ENCODE measurements at regions of chr6 and their contacts with region 1.

Region 1: DNA sequence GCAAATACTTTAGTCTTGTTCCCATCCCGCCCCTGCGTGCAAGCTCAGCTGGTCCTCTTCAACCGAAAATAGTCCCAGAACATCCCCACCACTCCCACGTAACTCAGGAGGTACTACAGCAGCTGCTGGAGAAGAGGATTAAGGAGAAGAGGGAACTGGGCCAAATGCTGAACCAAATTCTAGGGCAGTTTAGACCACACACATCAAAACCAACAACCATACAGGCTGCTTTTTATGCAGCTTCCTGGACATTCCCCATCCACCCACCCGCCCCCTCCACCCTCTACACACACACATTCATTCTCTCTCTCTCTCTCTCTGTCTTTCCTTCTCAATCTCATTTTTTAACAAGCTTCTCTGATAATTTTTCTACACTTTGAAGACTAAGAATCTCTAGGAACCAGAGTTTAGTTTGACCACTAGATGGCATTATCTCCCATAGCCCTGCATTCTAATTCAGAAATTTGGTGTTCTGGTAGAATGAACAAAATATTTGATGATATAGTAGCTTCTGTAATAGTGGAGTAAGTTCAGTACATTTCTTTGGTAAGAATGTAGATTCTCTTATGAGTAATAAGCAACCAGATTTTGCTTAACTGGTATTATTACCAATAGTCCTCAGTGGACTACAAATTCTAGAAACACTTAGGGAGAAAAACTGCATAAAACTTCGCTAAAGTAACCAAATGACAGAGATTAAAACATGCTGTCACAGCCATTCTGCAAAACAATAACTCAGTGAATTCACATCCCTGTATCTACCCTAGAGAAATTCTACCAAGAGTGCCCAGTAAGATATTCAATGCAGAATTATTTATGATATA is 52.1 kb upstream of the BEND6 start:
- DNase-seq: peak; percentile 24 to 47 (median 35)
- ATAC-seq: peak; percentile 70
- H3K4me3 ChIP-seq: no peak overlapping the region
- H3K27ac ChIP-seq: no peak overlapping the region
- H3K4me1 ChIP-seq: peaks cover 0 to 4% of the 10 kb centered on the region in 2 experiments; a peak in 2 of 5 replicates
- H3K27me3 ChIP-seq: no peaks in the 10 kb centered on the region
- CTCF ChIP-seq: peak in 2 of 3 experiments; percentile 53 to 81; a peak in 4 of 6 replicates
- EP300 ChIP-seq: no peak
- POLR2A ChIP-seq: no peak
- RAD21 ChIP-seq: peak; percentile 56 to 73

Region 2: GRCh38 chr6:56938649-56939191 is 35.9 kb after region 1 on chr6:
- CTCF ChIA-PET with region 1: no interaction called
- POLR2A ChIA-PET with region 1: no interaction called
- in situ Hi-C with region 1: no loop called
- intact Hi-C with region 1: no loop called
- DNase-seq: peak in 1 of 4 experiments; percentile 27
- ATAC-seq: peak; percentile 42
- H3K4me3 ChIP-seq: no peak overlapping the region
- H3K27ac ChIP-seq: no peak overlapping the region
- H3K4me1 ChIP-seq: peaks cover 0 to 8% of the 10 kb centered on the region in 2 experiments; a peak in 2 of 5 replicates
- H3K27me3 ChIP-seq: no peaks in the 10 kb centered on the region
- CTCF ChIP-seq: no peak
- EP300 ChIP-seq: no peak
- POLR2A ChIP-seq: no peak
- RAD21 ChIP-seq: no peak

Region 3: GRCh38 chr6:57013521-57013926 is 110.7 kb after region 1 on chr6:
- CTCF ChIA-PET with region 1: no interaction called
- POLR2A ChIA-PET with region 1: no interaction called
- in situ Hi-C with region 1: no loop called
- intact Hi-C with region 1: loop called (anchors 5 kb)
- DNase-seq: peak in 3 of 4 experiments; percentile 19 to 54 (median 38)
- ATAC-seq: peak; percentile 83
- H3K4me3 ChIP-seq: no peak overlapping the region
- H3K27ac ChIP-seq: no peak overlapping the region
- H3K4me1 ChIP-seq: peaks cover 0 to 11% of the 10 kb centered on the region in 2 experiments; a peak in 3 of 5 replicates
- H3K27me3 ChIP-seq: no peaks in the 10 kb centered on the region
- CTCF ChIP-seq: no peak
- EP300 ChIP-seq: no peak
- POLR2A ChIP-seq: no peak
- RAD21 ChIP-seq: peak in 1 of 2 experiments; percentile 8; a peak in 1 of 4 replicates